ENCODE measurements at regions of chr19 and their contacts with region 1.

Region 1: GRCh38 chr19:18388100-18388959 is 2.4 kb downstream of the GDF15 start:
- DNase-seq: peak; percentile 83
- ATAC-seq: peak; percentile 90
- H3K4me3 Mint-ChIP-seq: peak overlapping the region; percentile 62
- H3K27ac Mint-ChIP-seq: no peak overlapping the region
- H3K4me1 Mint-ChIP-seq: peaks cover 6% of the 10 kb centered on the region
- H3K27me3 Mint-ChIP-seq: peaks cover 36% of the 10 kb centered on the region
- CTCF ChIP-seq: peak; percentile 100

Region 2: DNA sequence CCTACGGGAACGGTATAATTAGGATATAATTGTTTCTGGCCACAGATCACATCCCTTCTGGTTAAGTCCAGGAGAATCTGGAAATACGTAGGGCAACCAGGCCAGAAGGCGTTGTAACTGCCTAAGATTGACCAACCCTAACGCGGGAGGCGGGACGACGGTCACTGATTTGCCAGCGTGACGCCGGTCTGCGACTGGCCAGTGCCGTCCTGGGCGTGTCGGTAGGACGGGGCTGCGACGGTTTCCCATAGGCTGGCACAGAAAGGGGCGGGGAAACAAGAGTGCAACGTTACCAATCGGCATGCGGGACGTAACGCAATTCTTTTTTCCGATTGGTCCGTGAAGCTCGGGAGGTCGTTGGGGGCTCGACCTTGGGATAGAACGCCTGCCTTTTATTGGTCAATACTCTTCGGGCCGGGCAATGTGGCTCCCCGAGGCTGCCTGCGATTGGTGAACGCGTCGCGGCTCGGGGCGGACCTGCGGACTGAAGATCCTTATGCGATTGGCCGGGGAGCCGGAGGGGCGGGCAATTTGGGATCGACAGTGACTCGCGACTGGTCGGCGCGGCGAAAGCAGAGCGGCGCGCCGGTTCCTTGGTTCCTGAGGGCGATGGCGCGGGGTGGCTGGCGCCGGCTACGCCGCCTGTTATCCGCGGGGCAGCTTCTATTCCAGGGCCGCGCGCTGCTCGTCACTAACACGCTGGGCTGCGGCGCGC is 195.5 kb before region 1 on chr19 and contains the start of gene MPV17L2:
- CTCF ChIA-PET with region 1: interaction called, 12 read pairs
- POLR2A ChIA-PET with region 1: no interaction called
- intact Hi-C with region 1: no loop called
- DNase-seq: peak; percentile 99
- ATAC-seq: peak; percentile 93
- H3K4me3 Mint-ChIP-seq: peak within 1 kb of the TSS; percentile 79
- H3K27ac Mint-ChIP-seq: peak within 1 kb of the TSS; percentile 88
- H3K4me1 Mint-ChIP-seq: peaks cover 20% of the 10 kb centered on the region
- H3K27me3 Mint-ChIP-seq: no peaks in the 10 kb centered on the region
- CTCF ChIP-seq: no peak
- total RNA-seq, gene MPV17L2: 8.5 to 9.6 TPM

Region 3: DNA sequence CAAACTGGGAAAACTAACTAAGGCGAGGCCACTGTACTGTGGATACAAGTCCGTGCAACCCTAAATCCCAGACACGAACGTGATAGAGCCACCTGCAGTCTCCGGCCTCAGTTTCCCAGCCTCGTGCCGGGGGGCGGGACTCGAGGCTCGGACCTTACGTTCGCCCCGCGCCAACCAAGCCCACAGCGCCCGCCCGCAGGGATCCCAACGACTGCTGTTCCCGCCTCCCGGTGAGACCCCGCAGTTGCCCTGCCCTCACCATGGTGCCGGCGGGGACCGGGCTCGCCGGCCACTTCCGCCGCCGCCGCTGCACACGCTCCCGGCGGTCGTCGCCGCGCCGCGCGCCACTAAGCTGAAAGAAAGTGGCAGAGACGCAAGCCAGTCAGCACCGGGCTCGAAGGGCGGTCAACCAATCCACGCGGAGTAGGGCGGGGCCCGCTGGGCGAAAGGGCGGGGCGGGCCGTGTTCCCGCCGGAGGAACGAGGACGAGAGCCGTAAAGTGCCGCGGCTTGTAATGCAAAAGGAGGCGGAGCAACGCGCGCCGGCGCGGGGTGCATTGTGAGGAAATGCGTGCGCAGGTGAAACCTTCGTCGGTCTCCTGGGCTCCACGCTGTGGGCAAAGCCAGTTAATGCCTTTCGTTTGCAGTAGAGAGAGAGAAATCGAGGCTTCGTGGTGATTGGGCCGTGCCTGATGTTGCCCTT is 65.4 kb before region 1 on chr19 and contains the start of gene LSM4:
- CTCF ChIA-PET with region 1: interaction called, 19 read pairs
- POLR2A ChIA-PET with region 1: no interaction called
- intact Hi-C with region 1: no loop called
- DNase-seq: peak; percentile 100
- ATAC-seq: peak; percentile 94
- H3K4me3 Mint-ChIP-seq: peak within 1 kb of the TSS; percentile 85
- H3K27ac Mint-ChIP-seq: peak within 1 kb of the TSS; percentile 99
- H3K4me1 Mint-ChIP-seq: peaks cover 50% of the 10 kb centered on the region
- H3K27me3 Mint-ChIP-seq: no peaks in the 10 kb centered on the region
- CTCF ChIP-seq: peak; percentile 45
- total RNA-seq, gene LSM4: 426 to 433 TPM

Region 4: DNA sequence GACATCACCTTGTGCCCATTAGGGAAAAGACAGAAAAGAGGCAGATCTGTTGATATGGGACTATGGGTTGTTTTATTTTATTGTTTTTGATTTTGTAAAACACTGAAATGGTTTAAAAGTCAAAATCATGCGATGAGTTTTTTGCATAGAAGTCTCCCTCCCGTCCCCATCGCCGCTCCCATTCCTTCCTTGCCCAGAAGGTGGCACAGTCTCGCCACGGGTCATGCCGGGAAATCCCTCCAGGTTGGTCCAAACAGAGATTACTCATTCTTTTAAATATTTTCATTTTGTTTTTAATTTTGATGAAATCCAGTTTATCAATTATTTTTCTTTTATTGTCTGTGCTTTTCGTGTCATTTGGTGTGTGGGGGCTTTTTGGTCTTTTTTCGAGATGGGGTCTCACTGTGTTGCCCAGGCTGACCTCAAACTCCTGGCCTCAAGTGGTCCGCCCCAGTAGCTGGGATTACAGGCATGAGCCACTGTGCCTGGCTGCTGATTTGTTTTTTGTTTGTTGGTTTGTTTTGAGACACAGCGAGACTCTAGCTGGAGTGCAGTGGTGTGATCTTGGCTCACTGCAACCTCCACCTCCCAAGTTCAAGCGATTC is 38.7 kb before region 1 on chr19:
- CTCF ChIA-PET with region 1: interaction called, 90 read pairs
- POLR2A ChIA-PET with region 1: no interaction called
- intact Hi-C with region 1: no loop called
- DNase-seq: peak; percentile 64
- ATAC-seq: peak; percentile 58
- H3K4me3 Mint-ChIP-seq: no peak overlapping the region
- H3K27ac Mint-ChIP-seq: no peak overlapping the region
- H3K4me1 Mint-ChIP-seq: peaks cover 3% of the 10 kb centered on the region
- H3K27me3 Mint-ChIP-seq: no peaks in the 10 kb centered on the region
- CTCF ChIP-seq: peak; percentile 58

Region 5: DNA sequence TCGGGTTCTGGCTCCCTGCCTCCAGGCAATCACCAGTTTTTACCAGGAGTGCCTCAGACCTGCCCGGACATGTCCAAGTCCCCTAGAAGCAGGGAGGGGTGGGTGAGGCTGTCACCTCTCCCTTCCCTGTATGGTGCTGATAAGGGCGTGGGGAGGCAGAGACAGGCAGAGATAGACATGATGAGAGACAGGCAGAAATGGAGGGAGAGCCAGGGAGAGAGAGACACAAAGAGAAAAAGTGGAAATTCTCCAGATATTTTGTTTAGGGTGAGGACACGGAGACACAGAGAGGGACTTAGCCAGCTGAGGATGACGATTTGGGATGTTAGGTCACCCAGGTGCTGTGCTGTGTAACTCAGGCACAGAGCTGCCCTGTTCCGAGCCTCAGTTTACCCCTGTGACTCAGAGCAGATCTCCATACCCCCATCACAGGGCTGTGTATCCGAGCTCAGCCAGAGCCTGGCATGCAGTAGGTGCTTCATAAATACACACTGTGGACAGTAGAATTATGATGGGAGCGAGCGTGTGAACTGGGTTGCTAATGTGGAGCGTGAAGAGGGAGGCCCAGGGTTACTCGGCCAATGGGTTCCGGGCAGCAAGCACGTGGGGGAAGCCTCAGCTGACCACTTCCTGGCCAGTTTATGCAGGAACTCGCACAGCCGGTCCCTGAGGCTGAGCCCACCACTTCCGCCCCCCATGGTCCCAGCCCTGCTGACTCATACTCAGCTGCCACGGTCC is 14.3 kb before region 1 on chr19:
- CTCF ChIA-PET with region 1: interaction called, 15 read pairs
- POLR2A ChIA-PET with region 1: no interaction called
- intact Hi-C with region 1: no loop called
- DNase-seq: peak; percentile 91
- ATAC-seq: peak; percentile 93
- H3K4me3 Mint-ChIP-seq: peak overlapping the region; percentile 18
- H3K27ac Mint-ChIP-seq: peak overlapping the region; percentile 77
- H3K4me1 Mint-ChIP-seq: peaks cover 10% of the 10 kb centered on the region
- H3K27me3 Mint-ChIP-seq: no peaks in the 10 kb centered on the region
- CTCF ChIP-seq: no peak

Region 6: GRCh38 chr19:18419195-18419698 is 30.9 kb after region 1 on chr19 and contains the start of gene SSBP4:
- CTCF ChIA-PET with region 1: interaction called, 181 read pairs
- POLR2A ChIA-PET with region 1: interaction called, 9 read pairs
- intact Hi-C with region 1: no loop called
- DNase-seq: peak; percentile 72
- ATAC-seq: peak; percentile 38
- H3K4me3 Mint-ChIP-seq: peak within 1 kb of the TSS; percentile 86
- H3K27ac Mint-ChIP-seq: peak within 1 kb of the TSS; percentile 79
- H3K4me1 Mint-ChIP-seq: peaks cover 78% of the 10 kb centered on the region
- H3K27me3 Mint-ChIP-seq: peaks cover 11% of the 10 kb centered on the region
- CTCF ChIP-seq: no peak
- total RNA-seq, gene SSBP4: 98.2 to 102 TPM